ENCODE measurements at regions of chr1 and their contacts with region 1.

Region 1: GRCh38 chr1:233372218-233373125 is 44.9 kb downstream of the MAP3K21 start:
- DNase-seq: no peak
- H3K4me3 Mint-ChIP-seq: no peak overlapping the region
- H3K27ac Mint-ChIP-seq: no peak overlapping the region
- H3K4me1 Mint-ChIP-seq: peaks cover 8% of the 10 kb centered on the region
- H3K27me3 Mint-ChIP-seq: no peaks in the 10 kb centered on the region

Region 2: DNA sequence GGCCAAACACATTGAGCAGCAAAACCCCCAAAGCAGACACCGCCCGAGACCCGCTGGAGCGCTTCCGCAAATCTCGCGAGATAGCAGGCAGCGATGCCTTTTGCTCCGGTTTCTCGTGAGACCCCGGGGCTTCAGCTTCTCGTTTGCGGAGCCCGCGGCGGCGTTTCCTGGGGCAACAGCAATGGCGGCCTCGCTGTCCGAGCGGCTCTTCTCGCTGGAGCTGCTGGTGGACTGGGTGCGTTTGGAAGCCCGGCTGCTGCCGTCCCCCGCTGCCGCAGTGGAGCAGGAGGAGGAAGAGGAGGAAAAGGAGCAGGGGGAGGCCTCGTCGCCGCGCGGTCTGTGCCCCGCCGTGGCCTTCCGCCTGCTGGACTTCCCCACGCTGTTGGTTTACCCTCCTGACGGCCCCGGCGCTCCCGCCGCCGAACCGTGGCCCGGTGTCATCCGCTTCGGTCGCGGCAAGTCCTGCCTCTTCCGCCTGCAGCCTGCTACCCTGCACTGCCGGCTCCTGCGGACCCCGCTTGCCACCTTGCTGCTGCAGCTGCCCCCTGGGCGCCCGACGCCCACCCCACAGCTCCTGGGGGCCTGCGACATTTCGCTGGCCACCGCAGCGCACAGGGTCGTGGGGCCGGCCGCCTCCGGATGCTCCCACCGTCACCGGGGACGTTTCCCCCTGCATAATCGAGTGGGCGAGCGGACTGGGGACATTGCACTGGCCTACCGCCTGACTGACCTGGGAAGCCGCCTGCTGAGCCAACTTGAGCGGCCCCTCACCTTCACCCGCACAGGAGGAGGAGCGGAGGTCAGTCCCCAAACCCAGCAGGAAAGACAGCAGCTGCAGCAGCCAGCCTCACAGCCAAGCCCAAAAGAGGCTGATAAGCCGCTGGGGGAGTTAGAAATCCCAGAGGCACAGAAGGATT is 566.9 kb before region 1 on chr1 and contains the start of gene MAP10:
- CTCF ChIA-PET with region 1: no interaction called
- POLR2A ChIA-PET with region 1: no interaction called
- intact Hi-C with region 1: no loop called
- DNase-seq: peak; percentile 84
- H3K4me3 Mint-ChIP-seq: peak within 1 kb of the TSS; percentile 84
- H3K27ac Mint-ChIP-seq: peak within 1 kb of the TSS; percentile 38
- H3K4me1 Mint-ChIP-seq: peaks cover 21% of the 10 kb centered on the region
- H3K27me3 Mint-ChIP-seq: no peaks in the 10 kb centered on the region
- total RNA-seq, gene MAP10: 0.86 to 1.1 TPM

Region 3: DNA sequence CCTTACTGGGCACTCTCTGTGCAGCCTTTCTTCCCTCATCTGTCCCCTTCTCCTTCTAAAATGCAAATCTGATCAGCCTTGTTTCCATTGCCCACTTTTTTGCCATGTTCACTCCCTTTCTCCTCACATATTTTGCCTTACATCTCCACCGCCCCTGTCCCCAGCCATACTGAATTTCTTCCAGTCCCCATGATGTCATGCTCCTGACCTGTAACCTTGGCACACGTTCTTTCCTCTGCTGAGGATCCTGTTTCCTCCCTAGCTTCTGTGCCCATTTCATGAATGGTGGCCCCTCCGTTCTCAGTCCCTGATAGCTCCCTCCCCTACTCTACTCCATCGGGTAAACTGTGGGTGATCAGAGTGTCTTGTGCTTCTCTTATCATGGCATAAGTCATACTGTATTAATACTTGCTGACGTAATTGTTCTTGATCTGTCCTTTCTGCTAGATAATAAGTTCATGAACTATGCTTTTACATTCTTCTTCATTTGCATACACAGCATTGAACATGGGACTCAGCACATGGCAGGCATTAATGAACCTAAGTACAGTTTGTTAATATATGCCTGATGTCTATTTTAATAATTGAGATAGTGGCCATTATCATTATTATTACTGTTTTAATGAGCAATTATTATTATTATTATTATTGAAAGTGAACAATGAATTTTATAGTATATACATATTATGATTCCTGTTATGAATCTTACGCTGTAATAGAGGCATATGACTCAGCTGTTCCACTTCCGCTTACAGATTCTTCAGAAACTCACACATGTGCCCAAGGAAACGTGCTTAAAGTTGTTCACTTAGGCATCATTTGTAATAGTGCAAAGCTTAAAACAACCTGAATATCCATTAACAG is 16.4 kb before region 1 on chr1:
- CTCF ChIA-PET with region 1: interaction called, 3 read pairs
- POLR2A ChIA-PET with region 1: no interaction called
- intact Hi-C with region 1: loop called (anchors 2 kb)
- DNase-seq: peak; percentile 32
- H3K4me3 Mint-ChIP-seq: no peak overlapping the region
- H3K27ac Mint-ChIP-seq: no peak overlapping the region
- H3K4me1 Mint-ChIP-seq: peaks cover 31% of the 10 kb centered on the region
- H3K27me3 Mint-ChIP-seq: no peaks in the 10 kb centered on the region

Measured in activated CD4-positive, alpha-beta memory T cell treated with anti-CD3 and anti-CD28 coated beads for 36 hours (primary cell).